ENCODE measurements at regions of chr12 and their contacts with region 1.

Region 1: DNA sequence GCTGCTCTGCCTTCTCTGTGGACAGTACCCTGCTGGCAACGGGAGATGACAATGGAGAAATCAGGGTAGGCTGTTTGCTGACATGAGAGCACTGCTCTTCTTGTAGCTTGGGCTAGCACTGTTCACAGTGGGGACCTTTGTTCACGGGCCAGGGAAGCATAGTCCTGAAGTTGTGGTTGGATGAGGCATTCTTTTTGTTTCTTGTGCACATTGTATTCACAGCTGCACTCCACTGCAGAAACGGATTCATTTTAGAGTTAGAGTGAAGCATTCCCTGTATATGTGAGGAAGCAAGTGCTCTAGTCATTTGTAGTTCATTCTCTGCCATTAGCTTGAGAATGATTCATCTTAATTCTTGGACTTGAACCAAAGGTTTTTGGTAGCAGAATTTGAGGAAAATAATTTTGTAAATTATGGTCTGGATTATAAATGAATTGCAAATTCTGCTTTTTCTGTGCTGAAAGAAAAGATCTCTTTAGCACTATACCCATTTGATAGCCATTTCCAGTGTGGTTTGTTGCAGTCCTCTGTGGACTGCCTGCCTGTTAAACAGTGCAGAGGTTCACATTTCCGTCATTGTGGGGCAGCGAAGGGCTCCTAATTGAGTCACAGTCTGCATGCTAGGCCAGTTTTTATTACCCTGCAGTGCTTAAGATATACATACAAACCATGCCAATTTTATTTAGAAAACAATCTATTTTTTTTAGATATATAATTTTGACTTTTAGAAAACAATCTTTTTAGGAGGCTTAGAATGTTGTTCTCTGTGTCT is 80.6 kb downstream of the APAF1 start:
- DNase-seq: peak; percentile 59
- H3K4me3 Mint-ChIP-seq: no peak overlapping the region
- H3K27ac Mint-ChIP-seq: no peak overlapping the region
- H3K4me1 Mint-ChIP-seq: peaks cover 8% of the 10 kb centered on the region
- H3K27me3 Mint-ChIP-seq: no peaks in the 10 kb centered on the region

Region 2: DNA sequence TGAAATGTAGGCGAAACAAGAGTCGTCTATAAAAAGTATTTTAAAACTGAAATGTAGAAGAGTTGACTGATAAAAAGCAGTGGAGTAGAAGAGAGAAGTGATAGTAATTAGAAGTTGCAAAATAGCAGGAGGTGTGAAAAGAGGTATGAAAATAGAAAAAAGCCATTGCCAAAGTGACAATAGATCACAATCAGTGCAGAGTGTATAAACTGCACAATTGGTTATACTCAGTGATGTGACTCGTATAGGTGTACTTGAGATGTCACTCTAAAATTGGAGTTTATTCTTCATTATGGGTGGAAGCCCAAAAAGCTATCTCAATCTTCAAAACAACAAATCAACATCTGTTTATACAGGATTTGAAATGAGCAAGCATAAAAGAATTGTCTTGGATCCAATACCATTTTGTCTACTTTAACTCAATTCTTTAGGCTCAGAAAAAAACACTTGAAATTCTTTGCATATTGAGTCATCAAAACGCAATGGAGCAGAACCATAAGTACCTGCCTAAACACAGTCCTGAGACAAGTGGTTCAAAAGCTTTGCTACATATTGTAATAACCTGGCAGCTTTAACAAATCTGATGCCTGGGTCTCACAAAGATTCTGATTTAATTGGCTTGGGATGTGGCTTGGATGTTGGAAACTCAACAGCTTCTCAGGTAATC is 89.9 kb before region 1 on chr12:
- CTCF ChIA-PET with region 1: no interaction called
- POLR2A ChIA-PET with region 1: no interaction called
- DNase-seq: no peak
- H3K4me3 Mint-ChIP-seq: no peak overlapping the region
- H3K27ac Mint-ChIP-seq: no peak overlapping the region
- H3K4me1 Mint-ChIP-seq: peaks cover 11% of the 10 kb centered on the region
- H3K27me3 Mint-ChIP-seq: no peaks in the 10 kb centered on the region

Region 3: DNA sequence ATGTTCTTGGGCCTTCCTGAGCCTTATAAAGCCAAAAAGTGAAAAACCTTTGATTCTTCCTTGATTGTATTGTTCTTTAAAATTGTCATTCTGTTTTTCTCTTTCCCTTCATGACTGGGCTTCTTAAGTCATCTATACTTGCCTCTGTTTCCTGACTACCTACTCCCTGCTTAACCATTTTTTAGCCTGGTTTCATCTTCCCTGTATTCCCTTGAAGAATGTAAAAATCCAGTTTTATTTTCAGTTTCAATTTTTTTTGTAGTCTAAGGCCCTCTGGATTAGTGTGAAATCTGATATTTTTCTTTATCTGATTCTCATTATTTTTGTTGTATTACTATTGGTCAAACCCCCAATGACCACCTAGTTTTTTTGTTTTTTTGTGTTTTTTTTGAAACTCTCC is 34.3 kb before region 1 on chr12:
- CTCF ChIA-PET with region 1: no interaction called
- POLR2A ChIA-PET with region 1: no interaction called
- DNase-seq: no peak
- H3K4me3 Mint-ChIP-seq: no peak overlapping the region
- H3K27ac Mint-ChIP-seq: no peak overlapping the region
- H3K4me1 Mint-ChIP-seq: peaks cover 10% of the 10 kb centered on the region
- H3K27me3 Mint-ChIP-seq: no peaks in the 10 kb centered on the region

Region 4: DNA sequence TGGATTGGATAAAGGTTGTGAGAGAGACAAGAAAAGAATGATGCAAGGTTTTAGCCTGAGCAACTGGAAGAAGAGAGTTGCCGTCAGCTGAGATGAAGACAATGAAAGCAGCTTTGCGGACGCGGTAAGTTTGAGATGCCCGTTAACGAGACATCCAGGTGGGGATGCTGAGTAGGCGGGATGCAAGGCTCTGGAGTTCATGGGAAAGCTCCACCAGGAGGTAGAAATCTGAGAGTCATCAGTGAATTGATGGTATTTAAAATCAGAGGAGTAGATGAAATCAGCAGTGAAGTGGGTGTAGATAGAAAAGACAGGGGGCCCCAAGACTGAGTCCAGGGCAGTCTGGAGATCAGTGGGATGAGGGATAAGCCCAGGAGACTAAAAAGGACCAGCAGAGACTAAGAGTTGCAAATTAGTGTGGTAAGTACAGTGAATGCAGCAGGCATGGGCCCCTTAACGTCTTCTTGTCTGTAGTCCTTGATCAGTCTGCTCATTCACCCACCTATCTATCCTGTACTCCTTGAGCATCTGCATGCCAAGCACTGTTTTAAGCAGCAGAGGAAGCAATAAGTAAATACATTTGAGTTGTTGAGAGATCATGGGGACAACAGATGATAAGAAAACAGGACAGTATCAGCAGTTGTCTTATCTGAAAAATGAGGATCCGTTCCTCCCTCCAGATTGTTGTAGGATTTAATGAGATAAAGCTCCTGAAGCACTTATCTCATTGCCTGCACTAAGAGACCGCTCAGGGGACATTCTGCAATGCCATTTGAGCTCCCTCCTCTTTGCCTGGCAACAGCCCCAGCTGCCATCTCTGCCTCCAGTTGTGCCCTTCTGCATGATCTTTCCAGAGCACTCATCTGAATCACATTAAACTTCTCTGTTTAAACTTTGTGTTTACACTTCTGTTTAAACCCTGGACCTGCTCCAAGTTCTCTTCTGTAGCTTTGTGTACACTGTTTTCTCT is 11.0 kb after region 1 on chr12:
- CTCF ChIA-PET with region 1: interaction called, 11 read pairs
- POLR2A ChIA-PET with region 1: interaction called, 4 read pairs
- DNase-seq: no peak
- H3K4me3 Mint-ChIP-seq: no peak overlapping the region
- H3K27ac Mint-ChIP-seq: no peak overlapping the region
- H3K4me1 Mint-ChIP-seq: peaks cover 14% of the 10 kb centered on the region
- H3K27me3 Mint-ChIP-seq: no peaks in the 10 kb centered on the region

Measured in activated CD4-positive, alpha-beta T cell treated with anti-CD3 and anti-CD28 coated beads, Interleukin-2, amount 10 ng/mL, durations not matched to agents 7 days and 5 days (primary cell).